ENCODE measurements at regions of chr20 and their contacts with region 1.

Region 1: DNA sequence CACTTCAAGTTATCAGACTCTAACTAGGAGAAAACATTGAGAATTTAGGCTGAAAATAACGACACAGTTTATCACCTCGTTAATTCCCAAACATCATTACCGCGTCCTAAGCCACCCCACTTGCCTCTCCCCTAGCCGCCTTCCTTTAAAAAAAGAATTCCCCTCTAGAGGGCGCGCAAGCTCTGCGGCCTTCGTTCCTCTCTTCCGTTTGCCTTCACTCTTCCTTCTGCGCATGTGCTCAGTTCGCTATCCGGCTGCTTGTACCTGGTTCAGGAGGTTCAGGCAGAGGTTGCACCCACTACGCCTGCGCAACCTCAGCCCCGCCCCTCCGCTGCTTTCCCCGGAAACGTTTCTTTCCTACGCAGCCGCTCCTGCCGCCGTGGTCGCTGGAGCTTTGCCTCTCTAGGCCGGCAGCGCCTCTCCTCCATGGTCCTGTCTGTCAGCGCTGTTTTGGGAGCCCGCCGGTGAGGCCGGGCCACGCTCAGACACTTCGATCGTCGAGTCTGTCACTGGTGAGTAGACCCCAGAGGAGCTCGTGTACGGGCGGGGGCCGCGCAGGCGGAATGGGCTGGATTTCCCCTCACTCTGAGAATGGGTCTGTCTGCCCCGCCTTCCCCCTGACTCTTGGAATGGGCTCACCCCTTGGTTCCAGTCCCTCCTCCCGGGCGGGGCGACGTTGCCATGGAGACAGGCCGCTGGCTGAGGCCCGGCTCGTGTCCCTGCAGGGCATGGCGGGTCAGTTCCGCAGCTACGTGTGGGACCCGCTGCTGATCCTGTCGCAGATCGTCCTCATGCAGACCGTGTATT is at the start of gene SYS1:
- DNase-seq: peak; percentile 99
- ATAC-seq: peak; percentile 87
- H3K4me3 ChIP-seq: peak within 1 kb of the TSS; percentile 85
- H3K27ac ChIP-seq: peak within 1 kb of the TSS; percentile 82
- H3K4me1 ChIP-seq: peaks cover 23% of the 10 kb centered on the region
- H3K27me3 ChIP-seq: no peaks in the 10 kb centered on the region
- CTCF ChIP-seq: peak; percentile 91
- total RNA-seq, gene SYS1: 32.5 and 45.2 TPM in 2 replicates

Region 2: GRCh38 chr20:45322952-45323383 is 40.0 kb before region 1 on chr20:
- CTCF ChIA-PET with region 1: interaction called, 18 read pairs
- POLR2A ChIA-PET with region 1: no interaction called
- intact Hi-C with region 1: loop called (anchors 2 kb)
- DNase-seq: peak; percentile 70
- ATAC-seq: peak; percentile 54
- H3K4me3 ChIP-seq: no peak overlapping the region
- H3K27ac ChIP-seq: no peak overlapping the region
- H3K4me1 ChIP-seq: peaks cover 9% of the 10 kb centered on the region
- H3K27me3 ChIP-seq: no peaks in the 10 kb centered on the region
- CTCF ChIP-seq: peak; percentile 63

Region 3: DNA sequence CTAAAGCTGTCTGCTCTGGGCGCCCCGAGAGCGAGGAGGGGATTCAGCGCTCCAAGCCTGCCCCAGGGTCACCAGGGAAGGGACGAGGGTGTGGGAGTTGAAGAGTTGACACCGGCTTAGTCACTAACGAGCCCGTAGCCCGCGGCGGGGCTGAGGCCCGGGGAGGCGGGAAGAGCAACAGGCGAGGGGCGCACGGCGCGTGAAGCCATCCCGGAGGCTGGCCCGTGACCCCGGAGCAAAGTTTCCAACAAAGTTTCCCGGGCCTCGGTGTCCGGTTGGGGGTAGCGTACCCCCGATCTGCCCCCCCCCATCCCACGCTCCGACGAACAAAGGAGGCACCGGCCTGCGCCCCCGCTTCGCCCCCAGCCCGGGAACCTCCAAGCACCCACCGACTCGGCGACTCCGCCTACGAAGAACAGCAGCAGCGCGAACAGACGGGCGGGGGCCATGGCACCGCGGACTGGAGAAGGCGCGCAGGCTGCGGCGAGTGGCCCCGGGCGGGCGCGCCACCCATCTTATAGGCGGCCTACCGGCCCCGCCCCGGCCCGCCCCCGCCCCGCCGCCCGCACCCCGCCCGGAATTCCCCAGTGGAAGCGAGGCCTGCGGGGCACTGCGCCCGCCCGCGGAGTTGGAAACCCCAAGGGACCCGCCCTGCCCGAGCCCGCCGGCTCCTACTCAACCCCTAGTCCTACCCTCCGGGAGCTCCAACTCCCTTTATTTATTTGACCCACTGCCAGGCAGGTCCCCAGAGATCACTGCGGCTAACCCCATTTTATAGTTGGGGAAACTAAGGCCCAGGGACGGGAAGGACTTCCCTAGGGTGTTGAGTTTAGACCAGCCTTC is 14.8 kb before region 1 on chr20 and contains the start of gene SDC4:
- CTCF ChIA-PET with region 1: interaction called, 14 read pairs
- POLR2A ChIA-PET with region 1: interaction called, 5 read pairs
- intact Hi-C with region 1: no loop called
- DNase-seq: peak; percentile 71
- ATAC-seq: peak; percentile 20
- H3K4me3 ChIP-seq: peak within 1 kb of the TSS; percentile 97
- H3K27ac ChIP-seq: peak within 1 kb of the TSS; percentile 95
- H3K4me1 ChIP-seq: peaks cover 45% of the 10 kb centered on the region
- H3K27me3 ChIP-seq: no peaks in the 10 kb centered on the region
- CTCF ChIP-seq: no peak
- total RNA-seq, gene SDC4: 134 and 167 TPM in 2 replicates

Region 4: DNA sequence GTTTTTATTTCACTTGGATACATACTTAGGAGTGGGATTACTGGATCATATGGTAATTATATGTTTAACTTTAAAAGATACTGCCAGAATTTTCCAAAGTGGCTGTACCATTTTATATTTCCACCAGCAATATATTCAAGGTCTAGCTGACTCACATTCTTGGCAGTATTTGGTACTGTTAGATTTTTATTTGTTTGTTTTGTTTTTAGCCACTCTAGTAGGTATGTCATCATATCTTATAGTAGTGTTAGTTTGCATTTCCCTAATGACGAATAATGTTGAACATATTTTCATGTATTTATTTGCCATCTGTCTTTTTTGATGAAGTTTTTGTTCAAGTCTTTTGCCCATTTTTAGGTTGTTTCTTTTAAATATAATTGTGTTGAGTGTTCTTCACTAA is 20.1 kb after region 1 on chr20:
- CTCF ChIA-PET with region 1: no interaction called
- POLR2A ChIA-PET with region 1: no interaction called
- intact Hi-C with region 1: no loop called
- DNase-seq: peak; percentile 89
- ATAC-seq: peak; percentile 97
- H3K4me3 ChIP-seq: no peak overlapping the region
- H3K27ac ChIP-seq: peak overlapping the region; percentile 69
- H3K4me1 ChIP-seq: peaks cover 23% of the 10 kb centered on the region
- H3K27me3 ChIP-seq: no peaks in the 10 kb centered on the region
- CTCF ChIP-seq: no peak

Region 5: DNA sequence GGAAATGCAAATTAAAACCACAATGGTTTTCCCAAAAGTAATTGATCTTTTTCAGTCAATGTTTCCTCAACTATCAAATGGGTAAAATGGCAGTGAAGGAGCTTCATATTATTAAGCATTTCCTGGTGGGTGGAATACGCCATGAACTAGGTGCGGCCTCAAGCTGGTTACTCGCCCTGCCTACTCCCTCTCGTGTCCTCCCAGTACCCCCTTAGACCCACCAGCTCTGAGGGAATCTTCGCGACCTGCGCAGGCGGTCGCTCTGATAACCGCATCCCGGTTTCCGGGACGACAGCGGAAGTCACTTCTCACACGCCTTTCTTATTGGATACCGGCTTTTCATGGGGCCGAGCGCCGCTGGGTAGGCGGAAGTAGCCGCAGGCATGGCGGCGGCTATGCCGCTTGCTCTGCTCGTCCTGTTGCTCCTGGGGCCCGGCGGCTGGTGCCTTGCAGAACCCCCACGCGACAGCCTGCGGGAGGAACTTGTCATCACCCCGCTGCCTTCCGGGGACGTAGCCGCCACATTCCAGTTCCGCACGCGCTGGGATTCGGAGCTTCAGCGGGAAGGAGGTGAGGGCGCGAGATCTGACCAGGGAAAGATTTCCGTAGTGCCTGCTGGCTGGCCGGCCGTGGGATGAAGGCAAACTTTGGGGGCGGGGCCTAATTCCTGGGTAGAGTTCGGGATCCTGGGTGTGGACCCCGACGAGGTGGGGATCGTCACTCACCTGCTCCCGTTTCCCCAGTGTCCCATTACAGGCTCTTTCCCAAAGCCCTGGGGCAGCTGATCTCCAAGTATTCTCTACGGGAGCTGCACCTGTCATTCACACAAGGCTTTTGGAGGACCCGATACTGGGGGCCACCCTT is 53.0 kb after region 1 on chr20 and contains the start of gene PIGT:
- CTCF ChIA-PET with region 1: interaction called, 13 read pairs
- POLR2A ChIA-PET with region 1: interaction called, 10 read pairs
- intact Hi-C with region 1: loop called (anchors 1 kb)
- DNase-seq: peak; percentile 90
- ATAC-seq: peak; percentile 56
- H3K4me3 ChIP-seq: peak within 1 kb of the TSS; percentile 85
- H3K27ac ChIP-seq: peak within 1 kb of the TSS; percentile 59
- H3K4me1 ChIP-seq: peaks cover 47% of the 10 kb centered on the region
- H3K27me3 ChIP-seq: no peaks in the 10 kb centered on the region
- CTCF ChIP-seq: no peak
- total RNA-seq, gene PIGT: 101 and 129 TPM in 2 replicates

Region 6: GRCh38 chr20:45487231-45487635 is 124.2 kb after region 1 on chr20:
- CTCF ChIA-PET with region 1: no interaction called
- POLR2A ChIA-PET with region 1: no interaction called
- intact Hi-C with region 1: no loop called
- DNase-seq: no peak
- ATAC-seq: no peak
- H3K4me3 ChIP-seq: no peak overlapping the region
- H3K27ac ChIP-seq: no peak overlapping the region
- H3K4me1 ChIP-seq: peaks cover 16% of the 10 kb centered on the region
- H3K27me3 ChIP-seq: no peaks in the 10 kb centered on the region
- CTCF ChIP-seq: peak; percentile 38; the same call in 1 of the 2 replicates

Region 7: DNA sequence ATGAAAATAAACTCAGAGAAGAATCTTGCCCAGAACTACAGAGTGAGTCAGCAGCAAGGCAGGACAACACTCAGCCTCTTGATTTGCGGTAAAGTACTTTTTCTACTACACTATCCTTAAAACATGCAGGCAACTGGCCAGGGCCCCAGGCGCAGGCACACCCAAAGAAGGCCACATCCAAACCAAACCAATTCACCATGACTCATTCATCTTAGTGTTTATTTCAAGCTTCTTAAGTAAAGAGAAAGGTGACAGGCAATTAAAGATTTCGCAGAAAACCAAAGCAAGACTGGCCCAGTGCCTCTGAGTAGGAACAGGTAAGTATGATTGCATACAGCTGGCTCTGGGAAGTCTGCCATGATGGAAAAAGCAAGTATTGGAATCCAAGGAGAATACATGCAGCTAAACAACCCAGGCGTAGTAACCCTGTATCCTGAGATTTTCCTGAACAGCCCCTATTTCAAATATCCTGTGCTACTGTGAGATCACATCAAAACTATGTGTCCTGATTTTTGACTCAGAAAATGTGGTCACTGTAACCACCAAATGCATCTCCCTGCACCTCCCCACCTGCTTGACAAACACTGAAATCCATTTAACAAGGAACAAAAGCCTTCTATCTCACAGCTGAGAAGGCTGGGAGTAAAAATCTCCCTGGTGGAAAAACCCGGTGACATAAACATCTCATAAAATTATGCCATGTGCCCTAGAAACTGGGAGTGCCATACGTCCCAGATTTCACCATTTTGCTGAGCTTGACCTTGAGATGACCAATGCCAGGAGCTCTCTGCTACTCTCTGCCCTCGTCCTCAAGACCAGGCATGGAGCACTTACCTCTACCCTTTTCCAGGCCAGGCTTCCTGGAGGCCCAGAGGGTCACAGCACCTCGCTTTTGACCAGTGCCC is 416.3 kb after region 1 on chr20:
- CTCF ChIA-PET with region 1: no interaction called
- POLR2A ChIA-PET with region 1: no interaction called
- intact Hi-C with region 1: loop called (anchors 5 kb)
- DNase-seq: peak; percentile 99
- ATAC-seq: peak; percentile 63
- H3K4me3 ChIP-seq: peak overlapping the region; percentile 11; the same call in 1 of the 2 replicates
- H3K27ac ChIP-seq: peak overlapping the region; percentile 99
- H3K4me1 ChIP-seq: peaks cover 62% of the 10 kb centered on the region
- H3K27me3 ChIP-seq: no peaks in the 10 kb centered on the region
- CTCF ChIP-seq: no peak

Measured in PC-3 (cell line).